ENCODE measurements at regions of chr1 and their contacts with region 1.

Region 1: GRCh38 chr1:54464482-54465146 is 58.4 kb upstream of the SSBP3 start:
- DNase-seq: no peak
- H3K4me3 ChIP-seq: no peak overlapping the region
- H3K27ac ChIP-seq: no peak overlapping the region
- H3K4me1 ChIP-seq: no peaks in the 10 kb centered on the region
- H3K27me3 ChIP-seq: no peaks in the 10 kb centered on the region
- CTCF ChIP-seq: no peak

Region 2: GRCh38 chr1:54417123-54417522 is 47.5 kb before region 1 on chr1:
- CTCF ChIA-PET with region 1: no interaction called
- POLR2A ChIA-PET with region 1: interaction called, 13 read pairs
- intact Hi-C with region 1: no loop called
- DNase-seq: no peak
- H3K4me3 ChIP-seq: no peak overlapping the region
- H3K27ac ChIP-seq: no peak overlapping the region
- H3K4me1 ChIP-seq: 0 out of 2 replicates have a peak, but pooled peaks cover 3% of the 10 kb centered on the region
- H3K27me3 ChIP-seq: peaks cover 30% of the 10 kb centered on the region
- CTCF ChIP-seq: no peak